Activated B cell treated with CpG ODN at 0.5 μM for 24 hours (primary cell): ENCODE measurements at regions of chr18 and their contacts with region 1.

Region 1: GRCh38 chr18:13464432-13465123 is 246.0 kb downstream of the LDLRAD4 start:
- DNase-seq: peak; percentile 54
- ATAC-seq: peak; percentile 91
- H3K4me3 Mint-ChIP-seq: peak overlapping the region; percentile 91
- H3K27ac Mint-ChIP-seq: peak overlapping the region; percentile 91
- H3K4me1 Mint-ChIP-seq: peaks cover 30% of the 10 kb centered on the region
- H3K27me3 Mint-ChIP-seq: no peaks in the 10 kb centered on the region
- CTCF ChIP-seq: no peak

Region 2: GRCh38 chr18:13137670-13138419 is 326.7 kb before region 1 on chr18:
- CTCF ChIA-PET with region 1: no interaction called
- POLR2A ChIA-PET with region 1: interaction called, 13 read pairs
- intact Hi-C with region 1: loop called (anchors 2 kb)
- DNase-seq: peak; percentile 43
- ATAC-seq: peak; percentile 87
- H3K4me3 Mint-ChIP-seq: peak overlapping the region; percentile 98
- H3K27ac Mint-ChIP-seq: peak overlapping the region; percentile 97
- H3K4me1 Mint-ChIP-seq: peaks cover 23% of the 10 kb centered on the region
- H3K27me3 Mint-ChIP-seq: no peaks in the 10 kb centered on the region
- CTCF ChIP-seq: no peak

Region 3: GRCh38 chr18:13353084-13353823 is 111.3 kb before region 1 on chr18:
- CTCF ChIA-PET with region 1: no interaction called
- POLR2A ChIA-PET with region 1: no interaction called
- intact Hi-C with region 1: no loop called
- DNase-seq: no peak
- ATAC-seq: no peak
- H3K4me3 Mint-ChIP-seq: no peak overlapping the region
- H3K27ac Mint-ChIP-seq: no peak overlapping the region
- H3K4me1 Mint-ChIP-seq: no peaks in the 10 kb centered on the region
- H3K27me3 Mint-ChIP-seq: peaks cover 5% of the 10 kb centered on the region
- CTCF ChIP-seq: no peak

Region 4: GRCh38 chr18:13481820-13482617 is 17.4 kb after region 1 on chr18:
- CTCF ChIA-PET with region 1: no interaction called
- POLR2A ChIA-PET with region 1: no interaction called
- intact Hi-C with region 1: loop called (anchors 2 kb)
- DNase-seq: no peak
- ATAC-seq: peak; percentile 92
- H3K4me3 Mint-ChIP-seq: peak overlapping the region; percentile 75
- H3K27ac Mint-ChIP-seq: peak overlapping the region; percentile 84
- H3K4me1 Mint-ChIP-seq: peaks cover 36% of the 10 kb centered on the region
- H3K27me3 Mint-ChIP-seq: no peaks in the 10 kb centered on the region
- CTCF ChIP-seq: no peak

Region 5: GRCh38 chr18:13500227-13500865 is 35.8 kb after region 1 on chr18:
- CTCF ChIA-PET with region 1: no interaction called
- POLR2A ChIA-PET with region 1: interaction called, 8 read pairs
- intact Hi-C with region 1: loop called (anchors 1 kb)
- DNase-seq: no peak
- ATAC-seq: no peak
- H3K4me3 Mint-ChIP-seq: no peak overlapping the region
- H3K27ac Mint-ChIP-seq: no peak overlapping the region
- H3K4me1 Mint-ChIP-seq: peaks cover 19% of the 10 kb centered on the region
- H3K27me3 Mint-ChIP-seq: no peaks in the 10 kb centered on the region
- CTCF ChIP-seq: no peak

Region 6: GRCh38 chr18:13539050-13539449 is 74.5 kb after region 1 on chr18:
- CTCF ChIA-PET with region 1: no interaction called
- POLR2A ChIA-PET with region 1: no interaction called
- intact Hi-C with region 1: loop called (anchors 5 kb)
- DNase-seq: no peak
- ATAC-seq: peak; percentile 81
- H3K4me3 Mint-ChIP-seq: peak overlapping the region; percentile 75
- H3K27ac Mint-ChIP-seq: peak overlapping the region; percentile 85
- H3K4me1 Mint-ChIP-seq: peaks cover 44% of the 10 kb centered on the region
- H3K27me3 Mint-ChIP-seq: no peaks in the 10 kb centered on the region
- CTCF ChIP-seq: no peak